ENCODE measurements at regions of chr17 and their contacts with region 1.

Region 1: DNA sequence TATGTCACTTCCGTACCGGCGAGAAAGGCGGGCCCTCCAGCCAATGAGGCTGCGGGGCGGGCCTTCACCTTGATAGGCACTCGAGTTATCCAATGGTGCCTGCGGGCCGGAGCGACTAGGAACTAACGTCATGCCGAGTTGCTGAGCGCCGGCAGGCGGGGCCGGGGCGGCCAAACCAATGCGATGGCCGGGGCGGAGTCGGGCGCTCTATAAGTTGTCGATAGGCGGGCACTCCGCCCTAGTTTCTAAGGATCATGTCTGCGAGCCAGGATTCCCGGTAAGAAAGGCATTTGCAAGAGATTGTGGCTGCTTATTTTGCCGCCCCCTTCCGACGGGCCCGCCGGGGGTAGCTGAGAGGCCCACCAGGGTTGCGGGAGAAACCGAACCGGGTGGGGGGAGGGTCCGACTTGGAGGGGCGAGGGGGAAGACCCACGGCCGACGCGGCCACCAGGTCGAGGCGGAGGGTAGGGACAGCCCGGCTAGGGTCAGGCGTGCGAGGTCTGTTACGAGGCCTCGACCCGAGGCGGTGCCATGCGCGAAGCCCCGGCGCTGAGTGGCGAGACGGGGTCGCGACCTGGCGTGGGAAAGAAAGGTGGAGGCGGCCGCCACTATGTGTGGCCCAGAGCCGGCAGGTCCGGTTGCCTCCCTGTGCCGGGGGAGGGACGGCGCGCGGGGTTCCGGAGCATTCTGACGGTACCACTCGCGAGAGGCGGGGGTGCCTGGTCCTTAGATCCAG is 6.7 kb upstream of the CD68 start:
- DNase-seq: peak; percentile 99 to 100 (median 100)
- ATAC-seq: peak; percentile 91
- H3K4me3 ChIP-seq: peak overlapping the region; percentile 91
- H3K4me3 Mint-ChIP-seq: peak overlapping the region; percentile 90 to 100 (median 98)
- H3K27ac ChIP-seq: peak overlapping the region; percentile 96
- H3K27ac Mint-ChIP-seq: peak overlapping the region; percentile 94 to 99 (median 98)
- H3K4me1 ChIP-seq: peaks cover 21 to 31% of the 10 kb centered on the region in 2 donors
- H3K4me1 Mint-ChIP-seq: peaks cover 9 to 62% (median 48%) of the 10 kb centered on the region in 7 donors
- H3K27me3 ChIP-seq: no peaks in the 10 kb centered on the region
- H3K27me3 Mint-ChIP-seq: peaks cover 0 to 5% (median 0%) of the 10 kb centered on the region in 5 donors

Region 2: GRCh38 chr17:7239091-7240027 is 333.4 kb before region 1 on chr17 and contains the start of gene PHF23:
- CTCF ChIA-PET with region 1: no interaction called
- POLR2A ChIA-PET with region 1: interaction called, 3 read pairs
- intact Hi-C with region 1: loop called (anchors 1 to 2 kb)
- DNase-seq: peak; percentile 91 to 98 (median 97)
- ATAC-seq: peak; percentile 78
- H3K4me3 ChIP-seq: peak within 1 kb of the TSS; percentile 76
- H3K4me3 Mint-ChIP-seq: peak within 1 kb of the TSS; percentile 88 to 98 (median 95)
- H3K27ac ChIP-seq: peak within 1 kb of the TSS; percentile 92
- H3K27ac Mint-ChIP-seq: peak within 1 kb of the TSS; percentile 55 to 100 (median 95)
- H3K4me1 ChIP-seq: peaks cover 32 to 44% of the 10 kb centered on the region in 2 donors
- H3K4me1 Mint-ChIP-seq: peaks cover 38 to 67% (median 60%) of the 10 kb centered on the region in 7 donors
- H3K27me3 ChIP-seq: no peaks in the 10 kb centered on the region
- H3K27me3 Mint-ChIP-seq: peaks cover 0 to 7% (median 0%) of the 10 kb centered on the region in 5 donors
- total RNA-seq, gene PHF23: 12.3 to 58.7 (median 55.2) TPM

Region 3: DNA sequence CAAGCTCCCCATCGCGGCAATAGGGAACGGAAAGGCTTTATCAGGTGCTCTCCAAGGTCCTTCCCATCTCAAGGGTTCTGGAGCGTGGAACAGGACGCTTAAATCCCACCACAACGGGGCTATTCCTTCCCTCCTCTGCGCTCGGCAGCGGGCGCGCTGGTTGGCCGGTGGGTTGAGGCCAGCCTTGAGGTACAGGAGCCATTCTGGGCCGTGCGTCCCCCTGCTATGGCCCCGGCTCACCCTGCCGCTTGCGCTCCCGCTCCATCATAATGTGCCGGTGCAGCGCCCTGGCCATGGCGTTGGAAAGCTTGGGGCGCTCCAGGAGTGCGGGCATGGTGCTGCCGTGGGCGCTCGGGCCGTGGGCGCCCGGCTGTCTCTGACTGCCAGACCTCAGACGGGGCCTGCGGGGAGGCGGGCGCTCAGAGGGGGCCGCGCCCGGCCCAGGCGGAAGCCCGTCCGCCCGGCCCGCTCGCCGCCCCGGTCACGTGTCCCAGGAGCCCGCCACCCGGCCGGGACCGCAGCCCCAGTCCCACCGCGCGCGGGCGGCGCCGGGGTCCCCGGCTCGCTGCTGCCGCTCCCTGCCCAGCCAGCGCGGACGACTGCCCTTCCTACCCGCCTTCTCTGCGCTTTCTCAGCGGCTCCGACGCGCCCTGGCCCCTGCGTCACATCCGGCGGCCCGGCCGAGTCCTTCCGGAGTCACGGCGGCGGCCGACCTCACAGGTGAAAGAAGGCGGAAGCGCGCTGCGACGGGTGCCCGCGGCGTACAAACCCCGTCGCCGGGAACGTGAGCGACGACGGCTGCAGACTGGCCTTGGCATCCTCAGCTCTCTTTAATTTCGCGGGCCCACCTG is 257.8 kb before region 1 on chr17 and contains the start of gene GPS2:
- CTCF ChIA-PET with region 1: no interaction called
- POLR2A ChIA-PET with region 1: no interaction called
- intact Hi-C with region 1: no loop called
- DNase-seq: peak; percentile 90 to 95 (median 93)
- ATAC-seq: peak; percentile 88
- H3K4me3 ChIP-seq: peak within 1 kb of the TSS; percentile 85
- H3K4me3 Mint-ChIP-seq: peak within 1 kb of the TSS; percentile 85 to 96 (median 90)
- H3K27ac ChIP-seq: peak within 1 kb of the TSS; percentile 87
- H3K27ac Mint-ChIP-seq: peak within 1 kb of the TSS; percentile 85 to 97 (median 95)
- H3K4me1 ChIP-seq: peaks cover 30 to 35% of the 10 kb centered on the region in 2 donors
- H3K4me1 Mint-ChIP-seq: peaks cover 36 to 63% (median 54%) of the 10 kb centered on the region in 7 donors
- H3K27me3 ChIP-seq: no peaks in the 10 kb centered on the region
- H3K27me3 Mint-ChIP-seq: no peaks in the 10 kb centered on the region
- total RNA-seq, gene GPS2: 72.6 to 145 (median 107) TPM

Region 4: DNA sequence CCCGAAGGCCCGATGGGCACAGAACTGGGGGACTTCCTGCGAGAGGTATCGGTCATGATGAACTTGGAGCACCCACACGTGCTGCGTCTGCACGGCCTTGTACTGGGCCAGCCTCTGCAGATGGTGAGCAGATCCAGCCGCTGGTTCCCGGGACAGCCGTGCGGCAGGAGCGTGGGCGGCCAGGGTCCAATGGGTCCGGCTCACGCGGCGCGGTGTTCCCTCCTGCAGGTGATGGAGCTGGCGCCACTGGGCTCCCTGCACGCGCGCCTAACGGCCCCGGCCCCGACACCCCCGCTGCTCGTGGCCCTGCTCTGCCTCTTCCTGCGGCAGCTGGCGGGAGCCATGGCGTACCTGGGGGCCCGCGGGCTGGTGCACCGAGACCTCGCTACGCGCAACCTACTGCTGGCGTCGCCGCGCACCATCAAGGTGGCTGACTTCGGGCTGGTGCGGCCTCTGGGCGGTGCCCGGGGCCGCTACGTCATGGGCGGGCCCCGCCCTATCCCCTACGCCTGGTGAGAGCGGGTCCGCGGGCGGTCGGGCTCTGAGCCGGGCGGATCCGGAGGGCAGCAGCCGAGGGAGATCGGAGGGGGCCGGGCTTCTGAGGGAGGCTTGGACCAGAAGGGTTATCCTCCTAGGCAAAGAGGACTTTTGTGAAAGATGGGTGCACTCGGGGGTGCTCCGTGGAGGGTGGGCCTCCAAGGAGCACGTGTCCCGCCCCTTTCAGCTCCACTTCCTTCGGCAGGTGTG is 188.8 kb before region 1 on chr17:
- CTCF ChIA-PET with region 1: no interaction called
- POLR2A ChIA-PET with region 1: no interaction called
- intact Hi-C with region 1: loop called in 1 of 2 experiments (anchors 1 kb)
- DNase-seq: peak; percentile 74 to 88 (median 86)
- ATAC-seq: peak; percentile 98
- H3K4me3 ChIP-seq: peak overlapping the region; percentile 82
- H3K4me3 Mint-ChIP-seq: peak overlapping the region; percentile 74 to 89 (median 82)
- H3K27ac ChIP-seq: peak overlapping the region; percentile 94
- H3K27ac Mint-ChIP-seq: peak overlapping the region; percentile 73 to 96 (median 94)
- H3K4me1 ChIP-seq: peaks cover 10 to 13% of the 10 kb centered on the region in 2 donors
- H3K4me1 Mint-ChIP-seq: peaks cover 10 to 23% (median 15%) of the 10 kb centered on the region in 7 donors
- H3K27me3 ChIP-seq: peaks cover 0 to 11% of the 10 kb centered on the region in 2 donors
- H3K27me3 Mint-ChIP-seq: peaks cover 27 to 37% (median 33%) of the 10 kb centered on the region in 5 donors

Region 5: DNA sequence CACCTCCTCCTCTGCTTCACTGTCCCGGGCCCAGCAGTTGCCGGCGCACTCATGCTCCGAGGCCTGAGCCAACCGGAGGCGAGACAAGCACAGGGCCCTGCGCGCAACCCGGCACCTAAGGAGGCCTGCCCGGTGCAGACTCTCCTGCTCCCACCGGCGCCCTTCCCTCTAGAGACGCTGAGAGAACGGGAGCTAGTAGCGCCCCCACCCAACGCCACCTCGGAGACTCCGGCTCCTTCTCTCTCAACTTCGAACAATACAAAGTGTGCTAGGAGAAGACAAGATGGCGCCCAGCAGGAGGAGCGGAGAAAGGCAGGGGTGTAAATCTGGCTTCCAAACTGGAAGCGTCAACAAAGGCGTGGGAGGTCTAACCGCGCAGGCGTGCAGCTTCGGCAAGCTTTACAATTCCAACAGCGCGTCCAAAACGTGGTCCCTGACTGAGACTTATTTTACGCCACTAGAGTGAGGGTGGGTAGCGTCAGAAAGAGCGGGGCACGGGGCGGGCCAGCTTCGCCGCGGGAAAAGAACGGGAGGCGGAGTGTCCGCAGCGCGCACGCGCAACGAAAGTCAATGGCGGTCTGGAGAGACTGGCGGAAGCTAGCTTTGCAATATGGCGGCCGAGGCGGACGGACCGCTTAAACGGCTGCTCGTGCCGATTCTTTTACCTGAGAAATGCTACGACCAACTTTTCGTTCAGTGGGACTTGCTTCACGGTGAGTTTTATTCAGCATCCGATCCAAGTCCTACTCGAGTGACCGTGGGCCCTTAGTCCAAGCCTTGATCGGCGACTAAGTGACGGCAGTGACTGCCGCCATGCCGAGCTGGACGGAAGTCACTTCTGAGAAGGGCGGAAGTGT is 10.7 kb after region 1 on chr17 and contains the start of gene MPDU1:
- CTCF ChIA-PET with region 1: interaction called, 6 read pairs
- POLR2A ChIA-PET with region 1: interaction called, 108 read pairs
- intact Hi-C with region 1: loop called (anchors 1 kb)
- DNase-seq: peak; percentile 89 to 98 (median 97)
- ATAC-seq: peak; percentile 80
- H3K4me3 ChIP-seq: peak within 1 kb of the TSS; percentile 100
- H3K4me3 Mint-ChIP-seq: peak within 1 kb of the TSS; percentile 89 to 100 (median 99)
- H3K27ac ChIP-seq: peak within 1 kb of the TSS; percentile 95
- H3K27ac Mint-ChIP-seq: peak within 1 kb of the TSS; percentile 98 to 100 (median 100)
- H3K4me1 ChIP-seq: peaks cover 28 to 35% of the 10 kb centered on the region in 2 donors
- H3K4me1 Mint-ChIP-seq: peaks cover 33 to 60% (median 55%) of the 10 kb centered on the region in 7 donors
- H3K27me3 ChIP-seq: no peaks in the 10 kb centered on the region
- H3K27me3 Mint-ChIP-seq: no peaks in the 10 kb centered on the region
- total RNA-seq, gene MPDU1: 25.4 to 79.8 (median 31.4) TPM

Region 6: DNA sequence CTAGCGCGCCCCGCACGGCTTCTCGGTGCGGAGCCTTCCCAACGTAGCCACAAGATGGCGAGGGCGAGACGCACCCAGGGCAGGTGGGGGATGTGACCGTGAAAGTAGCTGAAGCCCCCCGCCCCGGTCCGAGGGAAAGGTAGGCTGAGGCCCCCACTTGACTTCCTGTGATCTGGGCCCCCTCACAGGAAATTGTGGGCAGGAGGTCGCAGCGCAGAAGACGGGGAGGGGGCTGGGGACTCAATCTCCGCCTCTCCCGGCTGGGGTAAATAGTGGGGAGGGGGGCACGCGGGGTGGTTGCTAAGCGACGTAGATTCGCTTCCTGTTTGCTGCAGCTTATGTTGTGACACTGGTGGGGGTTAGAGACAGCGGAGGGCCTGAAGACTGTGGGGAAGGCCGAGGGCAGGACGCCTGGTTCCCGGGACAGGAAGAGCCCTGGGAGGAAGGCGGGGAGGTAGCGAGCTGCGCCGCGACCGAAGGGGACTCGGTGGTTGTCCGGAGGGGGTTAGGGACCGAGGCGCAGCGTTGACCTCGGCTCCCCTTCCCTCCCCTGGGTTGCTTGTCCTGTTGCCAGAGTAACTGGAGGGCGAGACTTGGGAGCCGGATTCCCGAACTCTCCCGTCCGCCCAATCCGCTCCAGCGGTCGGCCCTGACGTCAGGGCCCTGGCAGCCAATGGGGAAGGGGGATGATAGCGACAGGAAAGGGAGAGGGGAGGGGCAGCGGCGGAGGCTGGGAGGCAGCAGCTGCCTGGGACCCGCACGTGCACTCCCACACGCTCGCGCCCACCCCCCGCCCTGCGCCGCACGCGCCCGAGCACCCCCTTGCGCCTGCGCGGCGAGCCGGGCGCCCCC is 262.4 kb after region 1 on chr17:
- CTCF ChIA-PET with region 1: no interaction called
- POLR2A ChIA-PET with region 1: no interaction called
- intact Hi-C with region 1: loop called in 1 of 2 experiments (anchors 2 kb)
- DNase-seq: peak; percentile 76 to 97 (median 95)
- ATAC-seq: peak; percentile 70
- H3K4me3 ChIP-seq: peak overlapping the region; percentile 96
- H3K4me3 Mint-ChIP-seq: peak overlapping the region; percentile 91 to 99 (median 96)
- H3K27ac ChIP-seq: peak overlapping the region; percentile 96
- H3K27ac Mint-ChIP-seq: peak overlapping the region; percentile 95 to 100 (median 99)
- H3K4me1 ChIP-seq: peaks cover 29 to 38% of the 10 kb centered on the region in 2 donors
- H3K4me1 Mint-ChIP-seq: peaks cover 28 to 60% (median 44%) of the 10 kb centered on the region in 7 donors
- H3K27me3 ChIP-seq: no peaks in the 10 kb centered on the region
- H3K27me3 Mint-ChIP-seq: peaks cover 0 to 28% (median 0%) of the 10 kb centered on the region in 5 donors

Region 7: GRCh38 chr17:8151123-8151640 is 578.4 kb after region 1 on chr17:
- CTCF ChIA-PET with region 1: no interaction called
- POLR2A ChIA-PET with region 1: no interaction called
- intact Hi-C with region 1: loop called (anchors 5 to 10 kb)
- DNase-seq: peak; percentile 89 to 96 (median 93)
- ATAC-seq: peak; percentile 67
- H3K4me3 ChIP-seq: peak overlapping the region; percentile 80
- H3K4me3 Mint-ChIP-seq: peak overlapping the region in 6 of 10 donors; percentile 64 to 95 (median 91)
- H3K27ac ChIP-seq: peak overlapping the region; percentile 95
- H3K27ac Mint-ChIP-seq: peak overlapping the region in 2 of 9 donors; percentile 96 to 99
- H3K4me1 ChIP-seq: peaks cover 50 to 53% of the 10 kb centered on the region in 2 donors
- H3K4me1 Mint-ChIP-seq: peaks cover 0 to 68% (median 45%) of the 10 kb centered on the region in 7 donors
- H3K27me3 ChIP-seq: no peaks in the 10 kb centered on the region
- H3K27me3 Mint-ChIP-seq: no peaks in the 10 kb centered on the region